Heart right ventricle (tissue), 16 donors: ENCODE measurements at regions of chr13 and their contacts with region 1.

Region 1: GRCh38 chr13:30158774-30159445 is 148.4 kb downstream of the KATNAL1 start:
- DNase-seq: no peak
- ATAC-seq: peak in 1 of 8 donors; percentile 44
- H3K4me3 ChIP-seq: no peak overlapping the region
- H3K27ac ChIP-seq: no peak overlapping the region
- H3K4me1 ChIP-seq: peaks cover 0 to 4% (median 0%) of the 10 kb centered on the region in 9 donors
- H3K27me3 ChIP-seq: peaks cover 0 to 13% (median 0%) of the 10 kb centered on the region in 7 donors
- CTCF ChIP-seq: peak in 2 of 9 donors; percentile 26 to 33

Region 2: DNA sequence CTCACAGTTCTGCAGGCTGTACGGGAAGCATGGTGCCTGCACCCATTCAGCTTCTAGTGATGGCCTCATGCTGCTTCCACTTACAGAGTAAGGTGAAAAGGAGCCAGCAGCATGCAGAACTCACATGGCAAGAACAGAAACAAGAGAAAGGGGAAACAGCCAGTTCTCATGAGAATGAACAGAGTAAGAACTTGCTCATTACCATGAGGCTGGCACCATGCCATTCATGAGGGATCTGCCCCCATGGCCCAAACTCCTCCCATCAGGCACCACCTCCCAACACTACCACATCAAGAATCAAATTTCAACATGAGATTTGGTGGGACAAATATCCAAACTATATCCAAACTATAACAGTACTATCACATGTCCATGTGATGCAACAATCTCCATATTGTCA is 76.3 kb after region 1 on chr13:
- intact Hi-C with region 1: loop called in 1 of 10 experiments (anchors 10 kb)
- DNase-seq: no peak
- ATAC-seq: no peak
- H3K4me3 ChIP-seq: no peak overlapping the region
- H3K27ac ChIP-seq: no peak overlapping the region
- H3K4me1 ChIP-seq: peaks cover 0 to 5% (median 0%) of the 10 kb centered on the region in 9 donors
- H3K27me3 ChIP-seq: no peaks in the 10 kb centered on the region
- CTCF ChIP-seq: no peak

Region 3: DNA sequence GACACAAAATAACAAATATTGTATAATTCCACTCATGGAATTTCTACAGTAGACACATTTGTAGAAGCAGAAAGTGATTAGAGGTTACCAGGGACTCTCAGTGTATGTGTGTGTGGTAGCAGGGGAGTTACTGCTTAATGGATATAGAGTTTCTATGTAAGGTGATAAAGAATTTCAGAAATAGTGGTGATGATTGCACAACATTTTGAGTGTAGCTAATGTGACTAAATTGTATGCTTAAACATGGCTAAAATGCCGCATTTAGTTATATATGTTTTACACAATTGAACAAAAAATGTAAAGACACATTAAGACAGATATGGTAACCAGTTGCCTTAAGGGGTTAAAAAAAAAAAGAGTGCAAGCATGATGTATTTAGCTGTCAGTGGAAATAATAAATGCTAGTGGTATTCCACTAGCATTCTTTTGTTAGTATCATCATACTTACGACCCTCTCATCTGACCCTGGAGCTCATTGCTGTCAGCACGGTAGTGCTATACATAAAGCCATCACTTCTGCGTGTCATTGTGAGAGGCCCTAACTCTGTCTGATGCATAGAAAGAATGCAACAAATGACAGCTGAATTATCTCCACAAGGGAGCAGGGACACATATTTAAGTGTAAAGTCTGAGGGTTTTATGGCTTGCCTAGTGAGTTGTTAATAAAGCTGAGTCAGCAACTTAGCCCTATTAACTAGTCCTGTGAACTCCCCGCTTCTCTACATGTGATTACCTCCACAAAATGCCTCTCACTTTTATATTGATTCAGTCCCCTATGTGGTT is 1446.4 kb after region 1 on chr13:
- intact Hi-C with region 1: no loop called
- DNase-seq: no peak
- ATAC-seq: no peak
- H3K4me3 ChIP-seq: no peak overlapping the region
- H3K27ac ChIP-seq: no peak overlapping the region
- H3K4me1 ChIP-seq: no peaks in the 10 kb centered on the region
- H3K27me3 ChIP-seq: no peaks in the 10 kb centered on the region
- CTCF ChIP-seq: no peak